ENCODE measurements at regions of chr6 and their contacts with region 1.

Region 1: GRCh38 chr6:16770701-16771569 is 9.7 kb upstream of the ATXN1 start:
- DNase-seq: peak; percentile 61 to 82
- H3K4me3 ChIP-seq: no peak overlapping the region
- H3K27ac ChIP-seq: no peak overlapping the region
- H3K4me1 ChIP-seq: peaks cover 0 to 3% (median 0%) of the 10 kb centered on the region in 4 experiments; a peak in 1 of 7 replicates
- H3K27me3 ChIP-seq: no peaks in the 10 kb centered on the region; a peak in 2 of 7 replicates
- CTCF ChIP-seq: peak; percentile 86 to 95 (median 94)
- EP300 ChIP-seq: no peak
- POLR2A ChIP-seq: no peak
- RAD21 ChIP-seq: peak; percentile 72 to 80

Region 2: DNA sequence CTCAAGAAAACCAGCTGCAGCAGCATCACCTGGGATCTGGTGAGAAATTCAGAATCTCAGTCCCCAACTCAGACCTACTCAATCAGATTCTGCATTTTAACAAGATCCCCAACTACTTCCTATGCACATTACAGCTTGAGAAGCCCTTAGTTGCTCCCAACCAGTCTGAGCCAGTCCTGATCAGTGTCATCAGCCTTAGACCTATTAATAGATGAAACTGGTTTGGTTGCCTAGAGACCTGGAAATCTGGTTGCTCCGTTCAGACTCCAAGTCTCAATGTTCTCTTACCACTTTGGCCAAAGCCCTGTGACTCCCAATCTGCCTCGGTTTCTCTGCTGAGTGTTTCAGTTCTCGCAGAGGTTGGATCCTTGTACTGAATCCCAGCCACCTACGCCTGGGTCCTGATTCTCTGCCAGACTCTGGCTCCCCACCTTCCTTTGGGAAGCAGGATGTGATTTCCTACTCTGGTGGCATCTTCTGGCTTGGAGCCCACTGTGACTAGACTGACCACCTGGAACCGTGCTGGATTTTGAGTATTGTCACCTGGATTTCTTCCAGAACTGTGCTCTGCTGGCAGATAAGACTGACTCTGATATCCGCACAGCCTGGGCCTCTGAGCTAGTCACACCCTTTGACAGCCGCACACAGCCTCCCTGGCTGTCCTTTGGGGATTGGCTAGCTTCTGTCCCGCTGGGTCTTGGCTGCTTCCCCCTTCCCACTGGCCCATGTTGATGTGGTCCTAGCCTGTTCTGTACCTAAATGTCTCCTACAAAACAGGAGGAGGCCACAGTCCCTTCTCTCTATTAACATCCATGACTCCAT is 10.6 kb after region 1 on chr6:
- CTCF ChIA-PET with region 1: interaction called, 17 read pairs
- POLR2A ChIA-PET with region 1: no interaction called
- DNase-seq: no peak
- H3K4me3 ChIP-seq: no peak overlapping the region
- H3K27ac ChIP-seq: no peak overlapping the region
- H3K4me1 ChIP-seq: no peaks in the 10 kb centered on the region; a peak in 1 of 7 replicates
- H3K27me3 ChIP-seq: no peaks in the 10 kb centered on the region
- CTCF ChIP-seq: no peak
- EP300 ChIP-seq: no peak
- POLR2A ChIP-seq: no peak
- RAD21 ChIP-seq: no peak

Region 3: GRCh38 chr6:16872543-16873235 is 101.8 kb after region 1 on chr6:
- CTCF ChIA-PET with region 1: interaction called, 13 read pairs
- POLR2A ChIA-PET with region 1: no interaction called
- DNase-seq: no peak
- H3K4me3 ChIP-seq: no peak overlapping the region
- H3K27ac ChIP-seq: no peak overlapping the region
- H3K4me1 ChIP-seq: peaks cover 0 to 4% (median 0%) of the 10 kb centered on the region in 4 experiments; a peak in 1 of 7 replicates
- H3K27me3 ChIP-seq: peaks cover 0 to 2% (median 0%) of the 10 kb centered on the region in 4 experiments; a peak in 1 of 7 replicates
- CTCF ChIP-seq: peak in 1 of 3 experiments; percentile 45; a peak in 2 of 4 replicates
- EP300 ChIP-seq: no peak
- POLR2A ChIP-seq: no peak
- RAD21 ChIP-seq: peak; percentile 17 to 39; a peak in 2 of 4 replicates

Measured in H1 (cell line).